Caco-2 (cell line): ENCODE measurements at regions of chr11 and their contacts with region 1.

Region 1: DNA sequence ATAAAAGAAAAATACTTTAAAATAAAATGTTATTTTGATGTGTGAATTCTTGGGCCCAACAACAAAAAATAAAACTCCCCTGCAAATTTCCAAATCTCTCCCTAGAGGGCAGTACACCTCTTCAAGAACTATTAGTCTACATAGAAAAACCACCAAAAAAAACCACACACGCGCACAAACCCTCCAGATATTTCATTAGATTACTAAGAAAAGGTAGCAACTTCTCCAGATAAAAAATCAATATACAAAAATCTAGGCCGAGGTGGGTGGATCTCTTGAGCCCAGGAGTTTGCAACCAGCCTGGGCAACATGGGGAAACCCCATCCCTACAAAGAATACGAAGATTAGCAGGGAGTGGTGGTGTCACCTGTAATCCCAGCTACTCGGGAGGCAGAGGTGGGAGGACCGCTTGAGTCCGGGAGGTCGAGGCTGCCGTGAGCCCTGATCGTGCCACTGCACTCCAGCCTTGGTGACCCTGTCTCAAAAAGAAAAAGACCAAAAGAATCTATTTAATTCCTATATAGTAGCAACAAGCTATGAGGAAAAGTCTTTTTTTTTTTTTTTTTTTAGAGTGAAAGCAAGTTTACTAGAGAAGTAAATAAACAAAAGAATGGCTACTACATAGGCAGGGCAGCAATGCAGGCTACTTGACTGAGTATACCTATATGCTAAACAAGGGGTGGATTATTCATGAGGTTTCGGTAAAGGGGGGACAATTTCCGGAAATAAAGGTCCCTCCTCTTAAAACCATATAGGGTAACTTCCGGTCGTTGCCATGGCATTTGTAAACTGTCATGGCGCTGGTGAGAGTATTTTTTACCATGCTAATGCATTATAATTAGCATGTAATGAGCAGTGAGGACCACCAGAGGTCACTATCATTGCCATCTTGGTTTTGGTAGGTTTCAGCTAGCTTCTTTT is 13.1 kb downstream of the B3GNT6 start:
- DNase-seq: peak; percentile 92 to 94
- H3K4me3 ChIP-seq: peak overlapping the region; percentile 41
- H3K4me3 Mint-ChIP-seq: peak overlapping the region; percentile 65
- H3K27ac Mint-ChIP-seq: peak overlapping the region; percentile 49
- H3K4me1 ChIP-seq: peaks cover 9% of the 10 kb centered on the region; the same call in 1 of the 2 replicates
- H3K4me1 Mint-ChIP-seq: peaks cover 15% of the 10 kb centered on the region
- H3K27me3 ChIP-seq: no peaks in the 10 kb centered on the region
- H3K27me3 Mint-ChIP-seq: no peaks in the 10 kb centered on the region
- CTCF ChIP-seq: peak; percentile 81 to 82

Region 2: GRCh38 chr11:76744186-76745043 is 302.9 kb before region 1 on chr11:
- CTCF ChIA-PET with region 1: interaction called, 10 read pairs
- POLR2A ChIA-PET with region 1: no interaction called
- intact Hi-C with region 1: no loop called
- DNase-seq: no peak
- H3K4me3 ChIP-seq: no peak overlapping the region
- H3K4me3 Mint-ChIP-seq: no peak overlapping the region
- H3K27ac Mint-ChIP-seq: no peak overlapping the region
- H3K4me1 ChIP-seq: peaks cover 17% of the 10 kb centered on the region
- H3K4me1 Mint-ChIP-seq: peaks cover 18% of the 10 kb centered on the region
- H3K27me3 ChIP-seq: no peaks in the 10 kb centered on the region
- H3K27me3 Mint-ChIP-seq: no peaks in the 10 kb centered on the region
- CTCF ChIP-seq: no peak

Region 3: DNA sequence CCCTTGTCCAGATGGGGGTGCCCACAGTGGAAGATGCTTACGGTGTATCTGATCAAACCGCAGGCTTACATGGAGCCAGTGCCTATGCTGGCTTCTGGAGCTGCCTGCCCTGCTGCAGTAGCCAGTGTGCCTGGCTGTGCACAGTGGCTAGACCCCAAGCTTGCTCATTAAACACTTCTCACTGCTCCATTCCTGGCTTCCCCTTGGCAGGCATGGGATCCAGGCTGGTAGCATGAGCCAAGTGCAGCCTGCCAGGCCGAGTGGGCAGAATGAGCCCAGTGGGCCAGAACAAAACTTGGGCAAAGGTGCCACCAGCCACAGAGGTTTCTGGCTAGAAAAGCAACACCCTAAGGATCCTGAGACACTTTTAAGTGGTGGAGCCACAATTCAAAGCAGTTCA is 68.4 kb before region 1 on chr11:
- CTCF ChIA-PET with region 1: no interaction called
- POLR2A ChIA-PET with region 1: no interaction called
- intact Hi-C with region 1: no loop called
- DNase-seq: no peak
- H3K4me3 ChIP-seq: no peak overlapping the region
- H3K4me3 Mint-ChIP-seq: no peak overlapping the region
- H3K27ac Mint-ChIP-seq: no peak overlapping the region
- H3K4me1 ChIP-seq: no peaks in the 10 kb centered on the region
- H3K4me1 Mint-ChIP-seq: no peaks in the 10 kb centered on the region
- H3K27me3 ChIP-seq: no peaks in the 10 kb centered on the region
- H3K27me3 Mint-ChIP-seq: no peaks in the 10 kb centered on the region
- CTCF ChIP-seq: no peak

Region 4: DNA sequence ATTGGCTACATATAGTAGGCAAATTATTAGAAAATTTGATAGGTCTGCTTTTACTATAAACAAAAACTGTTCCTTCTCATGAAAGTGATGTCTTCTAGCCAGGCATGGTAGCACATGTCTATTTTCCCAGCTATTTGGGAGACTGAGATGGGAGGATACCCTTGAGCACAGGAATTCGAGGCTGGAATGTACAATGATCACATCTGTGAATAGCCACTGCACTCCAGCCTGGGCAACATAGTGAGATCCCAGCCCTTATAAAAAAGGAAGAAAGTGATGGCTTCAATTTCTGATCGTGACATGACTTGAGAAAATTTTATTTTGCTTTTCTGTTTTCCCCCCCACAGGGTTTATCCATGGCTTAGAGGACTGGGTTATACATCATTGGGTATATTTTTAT is 32.6 kb before region 1 on chr11:
- CTCF ChIA-PET with region 1: no interaction called
- POLR2A ChIA-PET with region 1: no interaction called
- intact Hi-C with region 1: no loop called
- DNase-seq: no peak
- H3K4me3 ChIP-seq: no peak overlapping the region
- H3K4me3 Mint-ChIP-seq: no peak overlapping the region
- H3K27ac Mint-ChIP-seq: no peak overlapping the region
- H3K4me1 ChIP-seq: peaks cover 9% of the 10 kb centered on the region; the same call in 1 of the 2 replicates
- H3K4me1 Mint-ChIP-seq: peaks cover 11% of the 10 kb centered on the region
- H3K27me3 ChIP-seq: no peaks in the 10 kb centered on the region
- H3K27me3 Mint-ChIP-seq: no peaks in the 10 kb centered on the region
- CTCF ChIP-seq: no peak

Region 5: DNA sequence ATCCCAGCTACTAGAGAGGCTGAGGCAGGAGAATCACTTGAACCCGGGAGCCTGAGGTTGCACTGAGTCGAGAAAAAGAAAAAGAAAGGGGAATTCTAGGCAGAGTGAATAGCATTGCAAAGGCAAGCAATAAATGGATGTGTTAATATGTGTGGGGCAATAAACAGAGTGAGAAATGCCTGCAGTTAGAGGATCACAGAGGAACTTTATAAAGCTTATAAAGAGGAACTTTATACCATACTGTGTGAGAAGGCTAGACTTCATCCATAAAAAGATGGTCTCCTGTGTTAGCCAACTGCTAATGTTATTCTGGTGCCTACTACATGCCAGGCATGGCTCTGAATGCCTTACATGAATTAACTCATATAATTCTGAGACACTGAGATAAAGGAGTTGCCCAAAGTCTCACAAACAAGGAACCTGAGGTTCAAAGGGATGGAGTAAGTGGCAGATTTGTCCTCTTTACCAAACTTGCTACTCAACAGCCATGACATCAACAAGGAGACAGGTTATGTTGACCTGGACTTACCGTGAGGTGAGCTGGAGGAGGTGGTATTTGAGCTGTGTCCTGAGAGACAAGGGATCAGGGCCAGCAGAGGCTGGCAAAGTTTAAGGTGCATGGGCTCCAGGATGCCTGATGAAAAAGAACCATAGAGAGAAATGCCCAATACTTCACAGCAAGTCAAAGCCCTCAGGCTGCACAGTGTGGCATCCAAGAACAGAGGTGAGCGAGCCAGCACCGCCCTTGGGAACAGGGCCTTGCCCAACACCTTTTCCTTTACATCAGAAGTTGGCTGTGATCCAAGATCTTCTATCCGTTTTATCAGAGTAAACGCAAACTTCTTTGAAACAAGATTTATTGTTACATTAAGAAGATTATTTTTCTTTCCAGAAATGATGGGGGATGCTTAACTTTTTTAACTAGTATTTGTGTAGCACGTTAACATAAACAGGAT is 11.9 kb before region 1 on chr11:
- CTCF ChIA-PET with region 1: interaction called, 47 read pairs
- POLR2A ChIA-PET with region 1: interaction called, 4 read pairs
- intact Hi-C with region 1: loop called (anchors 1 kb)
- DNase-seq: peak in 1 of 2 experiments; percentile 46
- H3K4me3 ChIP-seq: no peak overlapping the region
- H3K4me3 Mint-ChIP-seq: peak overlapping the region; percentile 31
- H3K27ac Mint-ChIP-seq: no peak overlapping the region
- H3K4me1 ChIP-seq: peaks cover 28% of the 10 kb centered on the region
- H3K4me1 Mint-ChIP-seq: peaks cover 36% of the 10 kb centered on the region
- H3K27me3 ChIP-seq: no peaks in the 10 kb centered on the region
- H3K27me3 Mint-ChIP-seq: no peaks in the 10 kb centered on the region
- CTCF ChIP-seq: no peak

Region 6: DNA sequence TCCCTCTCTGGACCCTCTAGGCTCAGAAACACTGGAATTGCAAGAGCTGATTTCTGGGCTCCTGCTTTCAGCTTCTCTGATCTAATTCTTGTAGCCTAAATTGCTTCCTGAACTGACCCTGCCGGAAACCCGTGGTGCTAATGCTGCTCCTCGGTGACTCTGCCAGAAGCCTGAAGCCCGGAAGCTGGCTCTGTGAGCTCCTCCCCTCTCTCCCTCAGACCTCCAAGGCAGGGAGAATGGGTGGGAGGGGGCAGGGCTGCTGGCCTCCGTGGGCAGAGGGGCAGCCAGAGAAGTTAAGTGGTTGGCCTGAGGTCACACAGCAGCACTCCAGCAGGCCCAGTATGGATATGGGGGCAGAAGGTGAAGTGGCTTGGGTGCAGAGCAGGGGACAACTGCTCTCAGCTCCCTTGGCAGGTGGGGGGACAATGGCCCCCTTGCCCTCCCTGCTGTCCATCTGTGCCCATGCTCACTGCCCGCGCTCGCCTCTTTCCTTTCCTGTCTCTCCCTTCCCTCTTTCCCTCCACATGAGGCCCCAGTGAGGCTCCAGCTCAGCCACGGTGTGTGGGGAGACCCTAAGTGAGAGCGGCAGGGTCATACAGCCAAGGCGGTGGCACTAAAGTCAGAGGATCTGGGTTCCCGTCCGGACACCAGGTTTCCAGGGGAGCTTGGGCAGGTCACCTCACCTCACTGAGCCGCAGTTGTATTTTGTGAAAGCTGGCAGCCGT is 35.7 kb after region 1 on chr11:
- CTCF ChIA-PET with region 1: interaction called, 10 read pairs
- POLR2A ChIA-PET with region 1: interaction called, 10 read pairs
- intact Hi-C with region 1: loop called (anchors 1 kb)
- DNase-seq: peak in 1 of 2 experiments; percentile 26
- H3K4me3 ChIP-seq: no peak overlapping the region
- H3K4me3 Mint-ChIP-seq: no peak overlapping the region
- H3K27ac Mint-ChIP-seq: no peak overlapping the region
- H3K4me1 ChIP-seq: peaks cover 12% of the 10 kb centered on the region
- H3K4me1 Mint-ChIP-seq: peaks cover 7% of the 10 kb centered on the region
- H3K27me3 ChIP-seq: no peaks in the 10 kb centered on the region
- H3K27me3 Mint-ChIP-seq: no peaks in the 10 kb centered on the region
- CTCF ChIP-seq: no peak

Region 7: GRCh38 chr11:77113382-77114088 is 66.3 kb after region 1 on chr11:
- CTCF ChIA-PET with region 1: interaction called, 9 read pairs
- POLR2A ChIA-PET with region 1: interaction called, 9 read pairs
- intact Hi-C with region 1: loop called (anchors 1 kb)
- DNase-seq: peak in 1 of 2 experiments; percentile 76
- H3K4me3 ChIP-seq: no peak overlapping the region
- H3K4me3 Mint-ChIP-seq: no peak overlapping the region
- H3K27ac Mint-ChIP-seq: no peak overlapping the region
- H3K4me1 ChIP-seq: no peaks in the 10 kb centered on the region
- H3K4me1 Mint-ChIP-seq: peaks cover under 1% of the 10 kb centered on the region
- H3K27me3 ChIP-seq: no peaks in the 10 kb centered on the region
- H3K27me3 Mint-ChIP-seq: no peaks in the 10 kb centered on the region
- CTCF ChIP-seq: peak; percentile 96 to 98

Region 8: GRCh38 chr11:77187776-77188632 is 140.7 kb after region 1 on chr11:
- CTCF ChIA-PET with region 1: interaction called, 9 read pairs
- POLR2A ChIA-PET with region 1: no interaction called
- intact Hi-C with region 1: loop called (anchors 1 kb)
- DNase-seq: peak; percentile 83 to 91
- H3K4me3 ChIP-seq: no peak overlapping the region
- H3K4me3 Mint-ChIP-seq: no peak overlapping the region
- H3K27ac Mint-ChIP-seq: no peak overlapping the region
- H3K4me1 ChIP-seq: no peaks in the 10 kb centered on the region
- H3K4me1 Mint-ChIP-seq: no peaks in the 10 kb centered on the region
- H3K27me3 ChIP-seq: no peaks in the 10 kb centered on the region
- H3K27me3 Mint-ChIP-seq: no peaks in the 10 kb centered on the region
- CTCF ChIP-seq: peak; percentile 98 to 99